ENCODE measurements at regions of chr11 and their contacts with region 1.

Region 1: GRCh38 chr11:34174412-34175041 is 69.1 kb downstream of the NAT10 start:
- DNase-seq: peak; percentile 74 to 90 (median 84)
- H3K4me3 ChIP-seq: peak overlapping the region in 57 of 59 donors; percentile 3 to 60 (median 42)
- H3K27ac ChIP-seq: peak overlapping the region in 10 of 59 donors; percentile 12 to 71 (median 34)
- H3K27me3 ChIP-seq: peaks cover 0 to 3% (median 0%) of the 10 kb centered on the region in 45 donors
- CTCF ChIP-seq: peak; percentile 70 to 98 (median 92)

Region 2: GRCh38 chr11:34266090-34266912 is 91.8 kb after region 1 on chr11:
- intact Hi-C with region 1: loop called (anchors 2 to 5 kb)
- DNase-seq: peak in 6 of 10 donors; percentile 27 to 58 (median 49)
- H3K4me3 ChIP-seq: peak overlapping the region in 14 of 59 donors; percentile 1 to 19 (median 7)
- H3K27ac ChIP-seq: peak overlapping the region in 54 of 59 donors; percentile 8 to 89 (median 69)
- H3K27me3 ChIP-seq: no peaks in the 10 kb centered on the region
- CTCF ChIP-seq: no peak

Region 3: DNA sequence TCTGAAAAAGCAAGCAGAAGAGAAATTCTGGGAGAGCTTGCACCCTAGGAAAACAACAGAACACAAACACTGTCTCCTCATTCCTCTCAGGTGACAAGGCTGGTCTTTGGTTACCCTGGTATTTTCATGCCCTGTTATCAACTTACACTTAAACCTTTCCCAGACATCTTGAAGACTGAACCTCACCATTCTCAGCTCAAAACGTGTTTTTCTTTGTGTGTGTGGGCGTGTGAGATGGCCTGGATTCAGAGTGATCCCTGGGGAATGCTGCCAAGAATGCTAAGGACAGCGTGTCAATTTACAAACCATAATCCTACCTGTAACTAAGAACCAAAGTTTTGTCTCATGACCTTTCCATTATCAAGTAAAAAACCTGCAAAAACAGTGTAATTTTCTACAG is 305.8 kb after region 1 on chr11:
- intact Hi-C with region 1: loop called (anchors 5 to 10 kb)
- DNase-seq: no peak
- H3K4me3 ChIP-seq: no peak overlapping the region
- H3K27ac ChIP-seq: no peak overlapping the region
- H3K27me3 ChIP-seq: no peaks in the 10 kb centered on the region
- CTCF ChIP-seq: no peak

Region 4: DNA sequence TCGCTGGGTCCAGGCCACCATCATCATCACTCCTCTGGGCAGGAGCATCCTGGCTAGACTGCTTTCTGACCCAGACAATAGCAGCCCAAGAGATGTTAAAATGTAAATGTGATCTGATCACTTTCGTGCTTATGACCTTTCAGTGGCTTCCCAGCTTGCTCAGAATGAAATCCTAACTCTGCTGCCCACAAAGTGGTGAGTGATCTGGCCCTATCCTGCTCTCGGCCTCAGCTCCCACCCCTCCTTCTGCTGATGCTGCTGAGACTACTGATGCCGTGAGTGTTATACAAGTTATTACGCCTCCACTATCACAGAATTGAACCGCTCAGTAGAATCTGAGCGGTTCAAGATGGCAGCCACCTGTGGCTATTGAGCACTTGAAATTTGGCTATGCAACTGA is 312.9 kb after region 1 on chr11:
- intact Hi-C with region 1: loop called (anchors 5 to 10 kb)
- DNase-seq: no peak
- H3K4me3 ChIP-seq: no peak overlapping the region
- H3K27ac ChIP-seq: no peak overlapping the region
- H3K27me3 ChIP-seq: no peaks in the 10 kb centered on the region
- CTCF ChIP-seq: no peak

Region 5: DNA sequence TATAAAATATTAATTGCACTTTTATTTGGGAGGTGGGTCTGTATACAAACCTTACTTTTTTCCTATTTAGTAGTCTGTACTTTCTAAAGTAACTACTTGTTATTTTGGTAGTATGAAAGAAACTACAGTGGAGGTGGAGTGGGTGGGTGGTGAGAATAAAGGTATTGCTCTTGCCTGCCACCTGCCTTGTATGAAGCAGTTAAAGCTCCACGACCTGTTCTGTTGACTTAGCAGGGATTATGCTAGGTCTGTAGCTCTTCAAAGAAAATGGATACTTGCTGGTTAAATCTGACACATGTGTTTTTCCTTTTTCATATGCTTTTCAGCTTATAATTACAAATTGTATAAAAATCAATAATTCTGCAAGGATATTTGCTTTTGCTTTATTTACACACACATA is 558.3 kb after region 1 on chr11:
- intact Hi-C with region 1: no loop called
- DNase-seq: no peak
- H3K4me3 ChIP-seq: no peak overlapping the region
- H3K27ac ChIP-seq: no peak overlapping the region
- H3K27me3 ChIP-seq: no peaks in the 10 kb centered on the region
- CTCF ChIP-seq: no peak

Measured in dorsolateral prefrontal cortex (tissue), 120 donors.